CD4-positive, alpha-beta memory T cell (primary cell): ENCODE measurements at regions of chr17 and their contacts with region 1.

Region 1: DNA sequence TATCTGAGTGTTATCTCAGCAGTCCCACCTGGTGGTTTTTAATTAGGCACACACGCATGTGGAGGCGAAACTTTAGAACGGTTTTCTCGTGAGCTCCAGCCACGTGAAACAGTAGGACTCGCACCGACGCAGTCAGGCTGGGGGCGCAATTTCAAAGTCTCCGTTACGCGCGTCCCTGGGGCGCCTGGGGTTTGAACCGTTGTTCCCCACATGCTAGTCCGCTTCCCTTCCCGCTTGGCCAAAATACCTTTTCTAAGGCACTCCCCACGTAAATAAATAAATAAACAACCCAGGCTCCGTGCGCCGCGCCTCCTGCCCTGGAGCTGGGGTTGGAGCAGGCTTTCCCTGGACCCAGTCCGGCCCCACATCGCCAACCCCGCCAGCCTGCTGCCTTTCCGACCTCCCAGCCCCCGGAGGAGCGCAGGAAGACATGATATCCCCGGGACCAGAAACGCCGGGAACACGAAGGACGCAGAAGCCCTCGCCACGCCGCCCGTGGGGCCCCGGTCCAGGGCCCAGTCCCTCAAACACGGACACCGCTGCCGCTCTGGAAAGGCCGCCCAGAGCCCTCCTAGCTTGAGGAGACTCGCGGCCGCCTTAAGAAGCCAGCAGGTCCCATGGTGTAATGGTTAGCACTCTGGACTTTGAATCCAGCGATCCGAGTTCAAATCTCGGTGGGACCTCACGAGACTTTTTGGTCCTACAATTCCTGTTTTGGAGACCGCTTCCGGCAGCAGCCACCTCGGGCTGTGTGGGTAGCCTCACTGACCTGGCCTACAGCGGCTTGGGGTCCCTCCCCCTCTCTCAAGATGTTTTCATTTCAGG is 18.2 kb downstream of the GNGT2 start:
- DNase-seq: peak; percentile 85 to 95 (median 91)
- H3K4me3 ChIP-seq: peak overlapping the region; percentile 48 to 65
- H3K4me3 Mint-ChIP-seq: peak overlapping the region; percentile 89 to 99 (median 91)
- H3K27ac ChIP-seq: peak overlapping the region; percentile 86
- H3K27ac Mint-ChIP-seq: peak overlapping the region; percentile 95 to 100 (median 97)
- H3K4me1 ChIP-seq: peaks cover 15% of the 10 kb centered on the region
- H3K4me1 Mint-ChIP-seq: peaks cover 10 to 45% (median 20%) of the 10 kb centered on the region in 4 donors
- H3K27me3 ChIP-seq: no peaks in the 10 kb centered on the region
- H3K27me3 Mint-ChIP-seq: peaks cover 0 to 6% of the 10 kb centered on the region in 2 donors

Region 2: DNA sequence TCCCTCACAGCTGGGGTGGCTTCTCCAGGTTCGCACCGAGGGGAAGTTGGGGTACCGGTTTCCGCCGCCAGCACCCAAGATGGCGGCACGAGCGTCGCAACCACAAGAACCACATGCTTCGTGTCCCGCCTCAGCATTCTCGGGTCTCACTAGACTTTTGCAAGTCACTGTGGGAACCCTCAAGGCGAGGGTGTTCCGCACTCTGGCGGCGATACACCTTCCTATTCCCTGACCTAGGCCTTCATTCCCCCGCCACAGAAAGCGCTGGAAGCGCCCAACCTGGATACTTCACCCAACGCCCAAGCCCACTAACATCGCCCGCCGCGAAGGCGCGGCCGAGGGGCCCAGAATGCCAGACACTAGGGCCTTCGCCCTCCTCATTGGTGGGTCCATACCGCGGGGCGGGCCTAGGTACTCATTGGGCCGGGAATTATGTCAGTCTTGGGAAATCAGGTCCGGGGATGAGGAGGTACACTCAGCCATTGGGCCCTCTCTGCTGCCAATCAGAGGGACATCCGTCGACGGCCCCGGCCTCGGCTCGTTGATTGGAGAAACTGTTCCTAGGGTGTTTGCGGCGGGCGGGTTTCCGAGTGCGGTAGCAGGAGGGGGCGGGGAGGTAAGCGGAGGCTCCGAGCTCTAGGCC is 1144.3 kb before region 1 on chr17 and contains the start of gene NFE2L1:
- CTCF ChIA-PET with region 1: no interaction called
- POLR2A ChIA-PET with region 1: no interaction called
- intact Hi-C with region 1: loop called (anchors 5 kb)
- DNase-seq: peak; percentile 98 to 100 (median 98)
- H3K4me3 ChIP-seq: peak within 1 kb of the TSS; percentile 86 to 88
- H3K4me3 Mint-ChIP-seq: peak within 1 kb of the TSS; percentile 94 to 99 (median 96)
- H3K27ac ChIP-seq: peak within 1 kb of the TSS; percentile 76
- H3K27ac Mint-ChIP-seq: peak within 1 kb of the TSS; percentile 94 to 99 (median 99)
- H3K4me1 ChIP-seq: peaks cover 54% of the 10 kb centered on the region
- H3K4me1 Mint-ChIP-seq: peaks cover 29 to 69% (median 49%) of the 10 kb centered on the region in 4 donors
- H3K27me3 ChIP-seq: no peaks in the 10 kb centered on the region
- H3K27me3 Mint-ChIP-seq: no peaks in the 10 kb centered on the region
- total RNA-seq, gene NFE2L1: 53.5 to 62.5 TPM

Region 3: DNA sequence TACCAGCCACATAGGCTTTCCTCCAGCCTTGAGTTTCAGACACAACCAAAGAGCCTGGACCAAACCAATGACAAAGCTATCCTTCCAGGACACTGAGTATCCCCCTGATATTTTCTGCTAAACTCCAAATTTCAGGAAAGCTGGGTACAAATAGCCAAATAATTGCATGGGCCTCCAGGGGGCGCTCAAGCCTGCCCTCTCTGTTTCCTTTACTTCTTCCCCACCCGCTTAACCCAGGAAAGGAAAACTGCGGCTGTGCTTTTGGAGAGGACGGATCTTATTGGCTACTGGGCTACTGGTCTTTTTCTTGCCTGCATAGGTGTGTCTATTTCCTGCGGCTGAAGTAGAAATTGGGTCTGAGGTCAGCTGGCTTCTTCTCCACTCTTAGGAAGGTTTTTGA is 11.8 kb before region 1 on chr17:
- CTCF ChIA-PET with region 1: interaction called, 54 read pairs
- POLR2A ChIA-PET with region 1: interaction called, 5 read pairs
- intact Hi-C with region 1: loop called (anchors 1 kb)
- DNase-seq: peak; percentile 44 to 59 (median 56)
- H3K4me3 ChIP-seq: no peak overlapping the region
- H3K4me3 Mint-ChIP-seq: peak overlapping the region in 2 of 8 donors; percentile 13 to 50
- H3K27ac ChIP-seq: no peak overlapping the region
- H3K27ac Mint-ChIP-seq: peak overlapping the region in 1 of 7 donors; percentile 54
- H3K4me1 ChIP-seq: peaks cover 4% of the 10 kb centered on the region
- H3K4me1 Mint-ChIP-seq: peaks cover 0 to 3% (median 2%) of the 10 kb centered on the region in 4 donors
- H3K27me3 ChIP-seq: no peaks in the 10 kb centered on the region
- H3K27me3 Mint-ChIP-seq: peaks cover 4% of the 10 kb centered on the region in 2 donors

Region 4: GRCh38 chr17:49217651-49218413 is 25.7 kb after region 1 on chr17:
- CTCF ChIA-PET with region 1: interaction called, 20 read pairs
- POLR2A ChIA-PET with region 1: interaction called, 169 read pairs
- intact Hi-C with region 1: loop called (anchors 1 kb)
- DNase-seq: peak; percentile 74 to 84 (median 83)
- H3K4me3 ChIP-seq: peak overlapping the region in 1 of 2 donors; percentile 22
- H3K4me3 Mint-ChIP-seq: peak overlapping the region; percentile 70 to 92 (median 84)
- H3K27ac ChIP-seq: peak overlapping the region; percentile 34
- H3K27ac Mint-ChIP-seq: peak overlapping the region; percentile 87 to 99 (median 96)
- H3K4me1 ChIP-seq: peaks cover 79% of the 10 kb centered on the region
- H3K4me1 Mint-ChIP-seq: peaks cover 49 to 76% (median 58%) of the 10 kb centered on the region in 4 donors
- H3K27me3 ChIP-seq: no peaks in the 10 kb centered on the region
- H3K27me3 Mint-ChIP-seq: no peaks in the 10 kb centered on the region

Region 5: DNA sequence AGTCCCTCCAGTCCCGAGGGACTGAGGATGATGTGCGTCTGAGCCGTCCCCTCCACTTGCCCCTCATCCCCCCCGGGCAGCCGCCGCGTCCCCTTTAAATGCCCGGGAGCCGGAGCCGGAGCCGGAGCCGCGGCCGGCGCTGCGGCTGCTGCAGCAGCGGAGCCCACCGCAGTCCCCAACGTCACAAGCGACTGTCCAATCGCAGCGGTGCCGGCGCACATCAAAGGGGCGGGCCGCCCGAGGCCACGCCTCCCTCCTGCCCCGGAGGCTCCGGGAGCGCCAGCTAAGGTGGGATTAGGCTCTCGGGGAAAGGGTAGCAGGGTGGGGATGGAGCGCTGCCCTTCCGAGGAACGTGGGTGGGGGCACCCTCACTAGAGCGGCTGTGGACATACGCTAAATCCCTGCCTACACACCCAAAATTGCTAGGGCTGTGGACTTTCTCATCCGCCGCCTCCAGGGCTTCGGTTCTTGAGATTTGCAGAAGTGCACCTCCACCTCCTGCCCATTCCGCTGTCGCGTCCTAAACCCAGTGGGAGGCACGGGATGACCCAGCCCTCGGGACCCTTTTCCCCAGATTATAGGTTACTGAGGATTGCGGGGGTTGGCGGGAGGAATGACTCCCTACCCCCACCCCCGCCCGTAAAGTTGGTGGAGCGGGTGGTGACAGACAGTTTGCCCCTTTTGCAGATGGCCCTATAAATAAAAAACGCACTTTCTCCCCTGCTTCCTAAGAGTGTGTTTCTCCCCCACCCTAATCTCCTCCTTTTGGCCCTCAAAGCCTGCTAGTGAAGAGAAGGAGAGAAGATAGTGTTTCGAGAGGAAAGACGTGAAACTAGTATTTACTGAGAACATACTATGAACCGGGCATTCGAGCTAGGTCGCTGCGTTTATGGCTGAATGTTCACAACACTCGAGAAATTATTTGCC is 38.8 kb after region 1 on chr17 and contains the start of gene PHOSPHO1:
- CTCF ChIA-PET with region 1: interaction called, 120 read pairs
- POLR2A ChIA-PET with region 1: interaction called, 82 read pairs
- intact Hi-C with region 1: loop called (anchors 1 kb)
- DNase-seq: peak; percentile 83 to 87 (median 84)
- H3K4me3 ChIP-seq: peak within 1 kb of the TSS; percentile 62 to 88
- H3K4me3 Mint-ChIP-seq: peak within 1 kb of the TSS; percentile 81 to 95 (median 86)
- H3K27ac ChIP-seq: no peak within 1 kb of the TSS
- H3K27ac Mint-ChIP-seq: peak within 1 kb of the TSS; percentile 35 to 96 (median 78)
- H3K4me1 ChIP-seq: peaks cover 17% of the 10 kb centered on the region
- H3K4me1 Mint-ChIP-seq: peaks cover 8 to 24% (median 13%) of the 10 kb centered on the region in 4 donors
- H3K27me3 ChIP-seq: peaks cover 16% of the 10 kb centered on the region
- H3K27me3 Mint-ChIP-seq: peaks cover 7 to 12% of the 10 kb centered on the region in 2 donors
- total RNA-seq, gene PHOSPHO1: not detected

Region 6: DNA sequence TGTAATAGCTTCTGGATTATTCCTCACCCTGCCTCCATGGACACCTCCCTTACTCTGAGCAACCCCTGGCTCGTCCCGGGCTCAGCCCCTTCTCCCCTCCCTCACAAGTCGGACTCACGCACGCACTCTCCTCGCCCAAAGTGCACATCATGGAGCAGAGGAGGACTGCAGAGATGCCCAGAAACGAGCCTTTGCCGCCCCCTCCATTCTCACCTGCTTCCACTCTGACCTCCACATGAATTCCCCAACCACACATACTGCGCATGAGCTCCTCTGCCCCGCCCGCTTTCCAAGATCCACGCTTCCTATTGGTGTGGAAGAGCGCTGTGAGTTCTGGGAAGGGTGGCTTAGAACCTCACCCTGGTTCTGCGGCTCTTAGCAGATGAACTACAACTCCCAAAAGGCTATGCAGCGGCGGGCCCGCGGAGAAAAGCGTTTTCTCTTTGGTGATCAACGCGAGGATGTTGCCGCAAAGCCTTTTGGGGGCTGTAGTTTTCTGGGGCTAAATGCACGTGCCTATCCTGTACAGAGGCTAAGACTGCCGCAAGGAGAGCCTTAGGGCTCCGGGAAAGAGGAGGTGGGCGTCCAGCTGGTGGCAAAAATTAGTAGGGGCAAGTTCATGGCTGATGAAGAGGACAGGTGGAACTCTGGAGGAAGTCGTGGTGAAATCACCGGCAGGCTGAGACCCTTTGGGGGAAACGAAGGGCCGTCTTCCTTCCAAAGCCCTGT is 222.7 kb after region 1 on chr17 and contains the start of gene PHB1:
- CTCF ChIA-PET with region 1: no interaction called
- POLR2A ChIA-PET with region 1: no interaction called
- intact Hi-C with region 1: loop called (anchors 1 kb)
- DNase-seq: peak; percentile 93 to 99 (median 94)
- H3K4me3 ChIP-seq: peak within 1 kb of the TSS; percentile 81 to 89
- H3K4me3 Mint-ChIP-seq: peak within 1 kb of the TSS; percentile 97 to 99 (median 98)
- H3K27ac ChIP-seq: peak within 1 kb of the TSS; percentile 65
- H3K27ac Mint-ChIP-seq: peak within 1 kb of the TSS; percentile 78 to 99 (median 96)
- H3K4me1 ChIP-seq: peaks cover 18% of the 10 kb centered on the region
- H3K4me1 Mint-ChIP-seq: peaks cover 14 to 27% (median 20%) of the 10 kb centered on the region in 4 donors
- H3K27me3 ChIP-seq: no peaks in the 10 kb centered on the region
- H3K27me3 Mint-ChIP-seq: no peaks in the 10 kb centered on the region
- total RNA-seq, gene PHB1: 62.0 to 64.2 TPM